Activated T-helper 1 cell treated with anti-CD3 and anti-CD28 coated beads, Interleukin-12 subunit alpha, Interleukin-12 subunit beta, Interleukin-2, Interleukin-4 antibody, amounts not matched to agents 30 ng/mL and 10 ng/mL and 1 ng/mL, durations not matched to agents 14 hours and 24 hours and 36 hours (primary cell): ENCODE measurements at regions of chr11 and their contacts with region 1.

Region 1: DNA sequence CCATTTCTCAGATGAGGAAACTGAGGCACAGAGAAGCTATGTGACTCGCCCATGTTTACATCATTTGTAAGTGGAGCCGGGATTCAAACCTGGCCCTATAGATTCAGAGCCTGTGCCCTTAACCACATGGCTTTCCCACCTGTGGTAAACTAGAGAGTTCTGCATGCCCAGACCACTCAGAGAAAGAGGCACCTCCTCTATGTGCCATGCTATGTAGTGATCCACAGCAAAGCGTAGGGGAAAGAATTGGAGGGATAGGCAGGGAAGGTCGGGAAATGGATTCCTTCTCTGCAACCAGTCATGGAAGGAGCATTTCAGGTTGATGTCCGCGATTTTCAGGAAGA is 15.4 kb upstream of the POU2AF2 start:
- DNase-seq: no peak
- H3K4me3 Mint-ChIP-seq: peak overlapping the region; percentile 67
- H3K27ac Mint-ChIP-seq: no peak overlapping the region
- H3K4me1 Mint-ChIP-seq: peaks cover 31% of the 10 kb centered on the region
- H3K27me3 Mint-ChIP-seq: peaks cover 12% of the 10 kb centered on the region

Region 2: GRCh38 chr11:109853156-109853776 is 1376.8 kb before region 1 on chr11:
- intact Hi-C with region 1: loop called (anchors 5 kb)
- DNase-seq: no peak
- H3K4me3 Mint-ChIP-seq: no peak overlapping the region
- H3K27ac Mint-ChIP-seq: no peak overlapping the region
- H3K4me1 Mint-ChIP-seq: no peaks in the 10 kb centered on the region
- H3K27me3 Mint-ChIP-seq: peaks cover 2% of the 10 kb centered on the region

Region 3: GRCh38 chr11:110447897-110448745 is 782.0 kb before region 1 on chr11:
- intact Hi-C with region 1: loop called (anchors 1 kb)
- DNase-seq: no peak
- H3K4me3 Mint-ChIP-seq: no peak overlapping the region
- H3K27ac Mint-ChIP-seq: no peak overlapping the region
- H3K4me1 Mint-ChIP-seq: peaks cover 26% of the 10 kb centered on the region
- H3K27me3 Mint-ChIP-seq: no peaks in the 10 kb centered on the region

Region 4: DNA sequence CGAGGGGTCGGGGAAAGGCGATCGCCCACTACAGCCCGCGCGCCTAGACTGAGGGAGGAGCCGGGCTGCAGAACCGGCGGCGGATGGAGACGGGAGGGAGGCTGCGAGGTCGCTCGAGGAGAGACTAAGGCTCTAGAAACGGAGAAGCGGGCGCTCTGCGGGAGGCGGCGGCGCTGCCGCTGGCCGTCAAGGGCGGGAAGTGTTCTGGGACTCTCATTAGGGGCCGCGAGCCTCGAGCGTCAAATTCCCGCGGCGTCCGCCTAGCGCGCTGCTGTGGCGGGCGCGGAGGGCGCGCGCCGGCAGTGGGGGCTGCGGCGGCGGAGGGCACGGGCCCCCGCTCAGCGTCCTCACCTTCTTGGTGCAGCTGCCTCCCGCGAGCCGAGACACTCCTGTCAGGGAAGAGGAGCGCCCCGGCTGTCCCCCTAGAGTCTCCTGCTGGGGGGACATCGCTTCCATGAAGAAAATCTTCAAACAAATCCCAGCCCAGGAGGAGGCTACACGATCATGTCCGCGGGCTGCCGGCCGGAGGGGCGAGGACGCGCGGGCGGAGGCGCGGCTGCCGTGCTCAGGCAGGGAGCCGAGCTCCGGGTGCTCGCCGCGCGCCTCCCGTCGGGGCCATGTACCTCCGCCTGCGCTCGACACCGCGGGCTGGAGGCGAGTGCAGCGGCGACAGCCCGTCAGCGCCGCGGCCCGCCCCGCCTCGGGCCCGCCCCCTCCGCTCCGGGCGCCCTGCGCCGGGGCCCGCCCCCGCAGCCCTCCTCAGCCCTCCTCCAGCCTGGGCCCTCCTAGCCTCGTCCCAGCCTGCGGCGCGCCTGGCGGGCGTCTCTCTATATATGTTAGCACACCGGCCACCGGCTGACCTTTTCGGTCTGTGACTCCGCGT is 518.1 kb before region 1 on chr11 and contains the start of gene ARHGAP20:
- intact Hi-C with region 1: loop called (anchors 5 kb)
- DNase-seq: peak; percentile 29
- H3K4me3 Mint-ChIP-seq: peak within 1 kb of the TSS; percentile 46
- H3K27ac Mint-ChIP-seq: no peak within 1 kb of the TSS
- H3K4me1 Mint-ChIP-seq: peaks cover 13% of the 10 kb centered on the region
- H3K27me3 Mint-ChIP-seq: peaks cover 57% of the 10 kb centered on the region
- total RNA-seq, gene ARHGAP20: not detected in 2 replicates

Region 5: DNA sequence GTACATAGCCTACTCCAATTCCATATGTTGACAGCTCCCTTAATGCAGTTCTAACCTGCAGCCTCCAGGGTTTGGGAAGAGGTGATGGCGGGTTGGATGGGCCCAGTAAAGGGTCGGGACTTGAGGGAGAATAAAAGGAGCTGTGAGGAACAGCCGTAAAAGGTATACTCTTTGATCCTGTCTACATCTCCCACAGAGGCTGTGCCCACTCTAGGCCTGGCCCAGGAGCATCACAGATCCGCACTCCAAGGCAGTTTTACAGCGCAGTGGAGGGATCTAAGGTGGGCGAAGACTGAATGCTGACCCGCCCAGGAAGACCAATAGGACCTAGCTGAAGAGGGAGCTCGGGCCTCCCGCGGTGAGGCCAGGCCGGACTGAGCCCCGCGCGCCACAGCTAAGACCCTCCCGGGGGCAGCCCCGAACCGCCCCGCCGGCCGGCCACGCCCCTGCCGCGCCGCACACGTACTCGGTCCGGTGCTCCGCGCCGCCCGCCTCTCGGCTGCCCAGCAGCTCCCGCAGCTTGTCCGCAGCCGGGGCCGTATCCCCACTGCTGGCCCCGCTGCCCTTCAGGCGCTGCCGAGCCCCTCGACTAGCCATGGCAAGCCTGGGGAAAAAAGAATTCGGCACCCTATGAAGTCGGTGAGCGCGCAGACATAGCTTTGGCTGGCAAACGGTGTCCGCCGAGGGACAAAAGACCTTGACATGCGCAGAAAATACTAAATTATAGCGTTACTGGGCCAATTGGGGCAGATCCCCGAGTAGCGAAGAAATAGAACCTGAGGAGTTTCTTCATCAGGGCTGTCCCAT is 641.0 kb after region 1 on chr11 and contains the start of gene ALG9:
- intact Hi-C with region 1: no loop called
- DNase-seq: peak; percentile 85
- H3K4me3 Mint-ChIP-seq: peak within 1 kb of the TSS; percentile 89
- H3K27ac Mint-ChIP-seq: peak within 1 kb of the TSS; percentile 90
- H3K4me1 Mint-ChIP-seq: peaks cover 32% of the 10 kb centered on the region
- H3K27me3 Mint-ChIP-seq: no peaks in the 10 kb centered on the region
- total RNA-seq, gene ALG9: 29.3 and 31.8 TPM in 2 replicates